ENCODE measurements at regions of chr6 and their contacts with region 1.

Region 1: DNA sequence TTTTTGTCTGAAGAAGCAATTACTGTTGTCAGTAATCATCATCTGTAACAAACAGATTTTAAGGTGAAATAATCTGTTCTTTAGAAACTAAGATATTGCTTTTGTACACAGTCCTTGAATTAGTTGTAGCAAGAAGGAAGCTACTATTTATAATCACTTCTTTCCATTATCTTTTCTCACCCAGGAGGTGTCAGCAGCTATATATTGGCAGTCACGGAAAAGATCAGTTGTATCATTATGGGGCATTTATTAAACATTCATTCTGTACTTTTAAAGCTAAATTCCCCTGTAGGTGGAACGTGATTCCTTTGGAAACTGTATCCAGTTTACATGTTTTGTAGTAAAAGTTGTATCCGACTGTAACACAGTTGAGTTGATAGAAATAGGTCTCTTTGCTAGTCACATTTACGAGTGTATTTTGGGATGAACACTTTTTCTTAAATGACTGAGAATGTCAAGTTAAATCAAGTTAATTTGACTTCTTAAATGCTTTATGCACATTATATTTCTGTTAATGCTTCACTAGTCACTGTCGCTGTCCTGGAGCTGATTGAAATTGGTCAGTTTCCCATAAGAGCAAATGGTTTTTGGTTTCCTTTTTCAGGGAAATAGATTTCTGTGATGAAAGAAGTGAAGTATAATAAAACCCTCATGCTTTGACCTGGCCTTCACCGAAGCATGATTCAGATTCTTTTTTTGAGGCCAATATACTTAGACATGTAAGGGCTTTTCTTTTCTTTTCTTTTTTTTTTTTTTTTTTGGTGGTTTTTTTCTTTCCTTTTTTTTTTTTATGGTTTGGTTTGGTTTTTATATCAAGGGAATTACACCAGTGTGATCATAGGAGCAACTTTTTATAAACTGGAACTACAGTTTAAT is 5.1 kb downstream of the QKI start:
- DNase-seq: no peak
- ATAC-seq: no peak
- H3K4me3 ChIP-seq: peak overlapping the region; percentile 5 to 93 (median 89)
- H3K27ac ChIP-seq: peak overlapping the region; percentile 67 to 100 (median 99)
- H3K4me1 ChIP-seq: peaks cover 5 to 78% (median 53%) of the 10 kb centered on the region in 9 donors
- H3K27me3 ChIP-seq: no peaks in the 10 kb centered on the region
- CTCF ChIP-seq: no peak

Region 2: GRCh38 chr6:163565140-163565539 is 145.5 kb after region 1 on chr6:
- intact Hi-C with region 1: loop called in 3 of 10 experiments (anchors 5 to 10 kb)
- DNase-seq: no peak
- ATAC-seq: peak in 5 of 8 donors; percentile 48 to 70 (median 64)
- H3K4me3 ChIP-seq: no peak overlapping the region
- H3K27ac ChIP-seq: peak overlapping the region in 3 of 10 donors; percentile 5 to 40 (median 26)
- H3K4me1 ChIP-seq: peaks cover 0 to 75% (median 61%) of the 10 kb centered on the region in 9 donors
- H3K27me3 ChIP-seq: no peaks in the 10 kb centered on the region
- CTCF ChIP-seq: no peak

Region 3: DNA sequence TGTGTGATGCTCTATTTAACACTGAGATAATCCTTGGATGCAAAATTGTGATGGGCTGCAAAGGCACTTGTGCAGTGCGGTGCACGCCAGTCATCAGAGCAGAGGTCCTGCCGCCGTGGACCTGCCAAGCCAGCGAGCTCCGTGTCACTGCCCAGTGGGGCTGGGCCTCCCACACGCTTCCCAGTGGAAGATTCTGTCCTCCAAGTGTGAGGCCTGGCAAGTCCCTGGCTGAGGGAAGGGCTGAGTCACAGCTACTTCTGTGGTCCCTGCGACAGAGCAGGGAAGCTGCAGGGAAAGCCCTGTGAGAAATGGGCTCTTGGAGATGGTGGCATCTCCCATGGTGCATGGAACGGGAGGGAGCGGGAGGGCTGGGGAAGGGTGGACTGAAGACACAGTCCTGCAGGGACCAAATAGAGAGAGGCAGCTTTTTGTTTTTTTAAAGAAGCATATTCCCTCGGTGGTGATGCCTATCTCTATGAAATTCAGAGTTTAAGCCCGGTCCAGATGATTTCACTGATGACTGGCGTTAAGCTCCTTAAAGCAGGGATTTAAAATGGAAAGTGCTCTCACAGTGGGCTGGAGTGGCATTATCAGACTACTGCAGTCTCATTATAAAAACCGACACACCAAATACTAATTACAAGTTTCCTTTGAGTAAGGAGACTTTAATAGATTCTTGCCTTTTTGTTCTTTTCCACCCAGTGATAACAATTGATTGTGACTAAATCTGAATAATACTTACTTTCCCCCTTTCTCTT is 408.6 kb after region 1 on chr6:
- intact Hi-C with region 1: no loop called
- DNase-seq: peak in 1 of 2 donors; percentile 42
- ATAC-seq: peak in 6 of 8 donors; percentile 39 to 85 (median 63)
- H3K4me3 ChIP-seq: no peak overlapping the region
- H3K27ac ChIP-seq: no peak overlapping the region
- H3K4me1 ChIP-seq: no peaks in the 10 kb centered on the region
- H3K27me3 ChIP-seq: no peaks in the 10 kb centered on the region
- CTCF ChIP-seq: no peak

Measured in heart right ventricle (tissue), 16 donors.